OCI-LY7 (cell line): ENCODE measurements at regions of chr17 and their contacts with region 1.

Region 1: DNA sequence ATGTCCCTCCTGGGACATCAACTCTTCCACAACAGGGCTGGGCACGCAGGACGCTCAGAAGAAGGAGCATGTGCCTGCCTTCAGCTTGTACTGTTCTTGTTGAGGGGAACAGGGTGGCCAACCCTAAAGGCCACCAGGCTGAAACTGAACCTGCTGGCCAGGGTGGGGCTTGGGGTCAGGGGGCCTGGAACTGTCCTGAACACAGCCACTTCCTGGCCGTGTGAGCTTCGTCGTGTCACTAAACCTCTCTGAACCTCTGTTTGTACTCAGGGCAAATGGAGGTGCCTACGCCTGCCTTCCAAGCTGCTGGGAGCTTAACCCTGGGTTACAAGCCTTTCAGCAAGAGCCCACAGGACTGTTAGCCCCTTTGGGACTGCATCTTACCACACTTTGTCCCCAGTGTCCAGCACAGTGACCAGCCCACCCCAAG is 6.7 kb downstream of the ARHGAP27 start:
- DNase-seq: no peak
- H3K4me3 ChIP-seq: no peak overlapping the region
- H3K27ac ChIP-seq: no peak overlapping the region
- H3K4me1 ChIP-seq: peaks cover 24% of the 10 kb centered on the region
- CTCF ChIP-seq: no peak

Region 2: DNA sequence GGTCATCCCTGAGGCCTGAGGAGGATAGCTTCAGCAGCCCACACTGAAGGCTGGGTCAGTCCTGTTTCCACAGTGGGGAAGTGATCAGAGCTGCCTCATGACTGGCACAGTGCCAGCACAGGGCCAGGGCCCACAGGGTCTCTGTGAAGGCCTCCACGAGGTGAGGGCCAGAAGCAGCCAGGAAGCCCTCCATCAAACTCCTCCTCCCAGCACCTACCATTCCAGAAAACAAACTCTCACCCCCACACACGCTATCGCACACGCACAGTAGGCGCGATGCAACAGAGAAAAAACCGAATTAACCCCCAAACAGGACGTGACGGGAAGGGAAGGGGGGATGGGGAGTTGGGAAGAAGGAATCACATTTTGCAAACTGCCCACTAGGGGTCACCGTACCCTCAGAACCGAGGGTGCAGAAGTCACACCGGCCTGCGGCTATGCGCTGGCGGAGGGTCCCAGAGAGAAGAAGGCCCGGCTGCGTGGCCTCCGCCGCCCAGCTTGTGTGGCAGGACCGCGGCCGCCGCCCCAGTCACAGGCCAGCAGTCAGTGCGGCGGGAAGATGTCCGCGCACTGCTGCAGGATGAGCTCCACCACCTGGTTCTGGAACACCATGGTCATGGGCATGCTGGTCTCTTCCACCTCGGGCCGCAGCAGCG is 31.0 kb before region 1 on chr17:
- CTCF ChIA-PET with region 1: interaction called, 4 read pairs
- POLR2A ChIA-PET with region 1: no interaction called
- intact Hi-C with region 1: loop called (anchors 2 kb)
- DNase-seq: peak; percentile 60
- H3K4me3 ChIP-seq: no peak overlapping the region
- H3K27ac ChIP-seq: no peak overlapping the region
- H3K4me1 ChIP-seq: peaks cover 4% of the 10 kb centered on the region
- CTCF ChIP-seq: peak; percentile 84